IMR-90 (cell line): ENCODE measurements at regions of chr11 and their contacts with region 1.

Region 1: GRCh38 chr11:60544076-60544475 is 28.9 kb downstream of the MS4A13 start:
- DNase-seq: no peak
- ATAC-seq: no peak
- H3K4me3 ChIP-seq: no peak overlapping the region
- H3K27ac ChIP-seq: no peak overlapping the region
- H3K4me1 ChIP-seq: no peaks in the 10 kb centered on the region
- H3K27me3 ChIP-seq: no peaks in the 10 kb centered on the region
- CTCF ChIP-seq: no peak
- POLR2A ChIP-seq: no peak
- RAD21 ChIP-seq: no peak

Region 2: GRCh38 chr11:60589607-60590006 is 45.5 kb after region 1 on chr11:
- CTCF ChIA-PET with region 1: no interaction called
- POLR2A ChIA-PET with region 1: no interaction called
- dilution Hi-C with region 1: no loop called
- in situ Hi-C with region 1: loop called (anchors 5 kb)
- intact Hi-C with region 1: no loop called
- DNase-seq: no peak
- ATAC-seq: no peak
- H3K4me3 ChIP-seq: no peak overlapping the region
- H3K27ac ChIP-seq: no peak overlapping the region
- H3K4me1 ChIP-seq: no peaks in the 10 kb centered on the region
- H3K27me3 ChIP-seq: no peaks in the 10 kb centered on the region
- CTCF ChIP-seq: 0 out of 2 replicates have a peak, but pooled peaks have one; percentile 17
- POLR2A ChIP-seq: no peak
- RAD21 ChIP-seq: no peak